ENCODE measurements at regions of chr5 and their contacts with region 1.

Region 1: GRCh38 chr5:126776497-126777256 is at the start of gene LMNB1:
- DNase-seq: peak; percentile 90 to 95 (median 93)
- H3K4me3 ChIP-seq: peak within 1 kb of the TSS; percentile 97
- H3K4me3 Mint-ChIP-seq: peak within 1 kb of the TSS; percentile 83 to 96 (median 93)
- H3K27ac ChIP-seq: peak within 1 kb of the TSS; percentile 96
- H3K27ac Mint-ChIP-seq: peak within 1 kb of the TSS; percentile 92 to 98 (median 95)
- H3K4me1 ChIP-seq: peaks cover 20% of the 10 kb centered on the region
- H3K4me1 Mint-ChIP-seq: peaks cover 26 to 29% (median 29%) of the 10 kb centered on the region in 3 donors
- H3K27me3 ChIP-seq: no peaks in the 10 kb centered on the region
- H3K27me3 Mint-ChIP-seq: peaks cover 0 to 1% of the 10 kb centered on the region in 2 donors
- total RNA-seq, gene LMNB1: 172 to 178 TPM

Region 2: GRCh38 chr5:126656396-126657007 is 120.2 kb before region 1 on chr5:
- CTCF ChIA-PET with region 1: interaction called, 34 read pairs
- POLR2A ChIA-PET with region 1: no interaction called
- DNase-seq: peak in 2 of 5 donors; percentile 4 to 15
- H3K4me3 ChIP-seq: no peak overlapping the region
- H3K4me3 Mint-ChIP-seq: no peak overlapping the region
- H3K27ac ChIP-seq: no peak overlapping the region
- H3K27ac Mint-ChIP-seq: no peak overlapping the region
- H3K4me1 ChIP-seq: no peaks in the 10 kb centered on the region
- H3K4me1 Mint-ChIP-seq: no peaks in the 10 kb centered on the region
- H3K27me3 ChIP-seq: no peaks in the 10 kb centered on the region
- H3K27me3 Mint-ChIP-seq: peaks cover 0 to 3% of the 10 kb centered on the region in 2 donors

Region 3: GRCh38 chr5:126732716-126733115 is 44.0 kb before region 1 on chr5:
- CTCF ChIA-PET with region 1: no interaction called
- POLR2A ChIA-PET with region 1: no interaction called
- DNase-seq: no peak
- H3K4me3 ChIP-seq: no peak overlapping the region
- H3K4me3 Mint-ChIP-seq: no peak overlapping the region
- H3K27ac ChIP-seq: no peak overlapping the region
- H3K27ac Mint-ChIP-seq: no peak overlapping the region
- H3K4me1 ChIP-seq: no peaks in the 10 kb centered on the region
- H3K4me1 Mint-ChIP-seq: peaks cover 7 to 10% (median 9%) of the 10 kb centered on the region in 3 donors
- H3K27me3 ChIP-seq: no peaks in the 10 kb centered on the region
- H3K27me3 Mint-ChIP-seq: peaks cover 0 to 8% of the 10 kb centered on the region in 2 donors

Region 4: DNA sequence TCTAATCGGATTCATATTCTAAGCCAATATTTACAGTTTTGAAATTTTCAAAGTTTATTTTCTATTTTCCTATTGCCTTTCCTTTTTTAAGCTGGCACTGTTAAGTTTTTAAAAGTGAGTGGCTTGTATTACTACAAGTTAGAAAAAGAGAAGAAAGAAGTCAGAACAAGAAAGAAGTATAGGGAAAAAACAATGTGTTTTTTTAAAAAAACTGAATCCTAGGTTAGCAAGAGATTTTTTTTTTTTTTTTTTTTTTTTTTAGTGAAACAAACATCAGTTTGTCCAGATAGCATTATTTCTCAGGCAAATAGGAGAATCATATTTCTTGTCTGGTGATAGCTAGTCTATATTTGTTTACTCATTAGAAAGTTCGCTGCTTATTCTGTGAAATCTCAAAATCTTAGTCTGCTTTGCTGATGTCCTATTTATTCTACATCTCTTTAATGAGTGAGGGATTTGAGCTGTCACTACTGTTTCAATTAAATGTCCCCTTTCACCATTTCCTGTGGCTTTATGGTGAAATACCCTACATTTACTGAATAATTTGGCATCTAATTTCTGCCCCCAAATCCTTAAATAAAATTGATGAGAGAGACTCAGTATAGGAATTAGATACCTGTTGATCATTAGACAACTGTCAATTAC is 18.8 kb before region 1 on chr5:
- CTCF ChIA-PET with region 1: interaction called, 9 read pairs
- POLR2A ChIA-PET with region 1: interaction called, 13 read pairs
- DNase-seq: no peak
- H3K4me3 ChIP-seq: no peak overlapping the region
- H3K4me3 Mint-ChIP-seq: peak overlapping the region in 6 of 7 donors; percentile 48 to 87 (median 70)
- H3K27ac ChIP-seq: no peak overlapping the region
- H3K27ac Mint-ChIP-seq: peak overlapping the region in 7 of 8 donors; percentile 1 to 83 (median 61)
- H3K4me1 ChIP-seq: peaks cover 9% of the 10 kb centered on the region
- H3K4me1 Mint-ChIP-seq: peaks cover 14 to 36% (median 31%) of the 10 kb centered on the region in 3 donors
- H3K27me3 ChIP-seq: no peaks in the 10 kb centered on the region
- H3K27me3 Mint-ChIP-seq: no peaks in the 10 kb centered on the region

Region 5: DNA sequence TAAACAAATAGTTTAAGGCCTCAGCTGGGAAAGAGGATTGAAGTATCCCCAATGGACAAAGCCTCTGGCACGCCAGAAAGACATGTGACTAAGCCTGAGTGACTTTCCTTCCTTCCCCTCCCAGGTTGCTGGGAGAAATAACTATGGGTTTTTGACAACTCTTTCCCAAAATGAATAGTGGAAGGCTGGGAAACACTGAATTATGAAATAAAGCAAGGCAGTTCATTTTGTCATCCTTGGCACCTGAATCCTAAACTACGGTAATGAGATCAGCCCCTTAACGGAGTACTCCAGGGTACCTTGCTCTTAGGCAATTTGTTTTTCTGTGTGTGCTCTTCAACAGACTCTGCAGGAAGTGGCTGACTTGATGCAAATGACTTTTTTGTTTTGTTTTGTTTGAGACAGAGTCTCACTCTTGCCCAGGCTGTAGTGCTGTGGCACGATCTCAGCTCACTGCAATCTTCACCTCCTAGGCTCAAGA is 75.5 kb after region 1 on chr5:
- CTCF ChIA-PET with region 1: interaction called, 13 read pairs
- POLR2A ChIA-PET with region 1: interaction called, 24 read pairs
- DNase-seq: peak in 1 of 5 donors; percentile 47
- H3K4me3 ChIP-seq: no peak overlapping the region
- H3K4me3 Mint-ChIP-seq: peak overlapping the region; percentile 75 to 92 (median 86)
- H3K27ac ChIP-seq: no peak overlapping the region
- H3K27ac Mint-ChIP-seq: peak overlapping the region; percentile 74 to 95 (median 92)
- H3K4me1 ChIP-seq: peaks cover 34% of the 10 kb centered on the region
- H3K4me1 Mint-ChIP-seq: peaks cover 45 to 50% (median 46%) of the 10 kb centered on the region in 3 donors
- H3K27me3 ChIP-seq: no peaks in the 10 kb centered on the region
- H3K27me3 Mint-ChIP-seq: no peaks in the 10 kb centered on the region

Region 6: GRCh38 chr5:127785098-127785927 is 1008.6 kb after region 1 on chr5:
- CTCF ChIA-PET with region 1: no interaction called
- POLR2A ChIA-PET with region 1: no interaction called
- DNase-seq: peak in 3 of 5 donors; percentile 11 to 62 (median 48)
- H3K4me3 ChIP-seq: no peak overlapping the region
- H3K4me3 Mint-ChIP-seq: peak overlapping the region; percentile 2 to 43 (median 20)
- H3K27ac ChIP-seq: no peak overlapping the region
- H3K27ac Mint-ChIP-seq: peak overlapping the region; percentile 11 to 95 (median 86)
- H3K4me1 ChIP-seq: no peaks in the 10 kb centered on the region
- H3K4me1 Mint-ChIP-seq: peaks cover 22 to 32% (median 28%) of the 10 kb centered on the region in 3 donors
- H3K27me3 ChIP-seq: no peaks in the 10 kb centered on the region
- H3K27me3 Mint-ChIP-seq: peaks cover 4 to 6% of the 10 kb centered on the region in 2 donors